Activated CD4-positive, alpha-beta T cell treated with anti-CD3 and anti-CD28 coated beads for 36 hours (primary cell): ENCODE measurements at regions of chr11 and their contacts with region 1.

Region 1: DNA sequence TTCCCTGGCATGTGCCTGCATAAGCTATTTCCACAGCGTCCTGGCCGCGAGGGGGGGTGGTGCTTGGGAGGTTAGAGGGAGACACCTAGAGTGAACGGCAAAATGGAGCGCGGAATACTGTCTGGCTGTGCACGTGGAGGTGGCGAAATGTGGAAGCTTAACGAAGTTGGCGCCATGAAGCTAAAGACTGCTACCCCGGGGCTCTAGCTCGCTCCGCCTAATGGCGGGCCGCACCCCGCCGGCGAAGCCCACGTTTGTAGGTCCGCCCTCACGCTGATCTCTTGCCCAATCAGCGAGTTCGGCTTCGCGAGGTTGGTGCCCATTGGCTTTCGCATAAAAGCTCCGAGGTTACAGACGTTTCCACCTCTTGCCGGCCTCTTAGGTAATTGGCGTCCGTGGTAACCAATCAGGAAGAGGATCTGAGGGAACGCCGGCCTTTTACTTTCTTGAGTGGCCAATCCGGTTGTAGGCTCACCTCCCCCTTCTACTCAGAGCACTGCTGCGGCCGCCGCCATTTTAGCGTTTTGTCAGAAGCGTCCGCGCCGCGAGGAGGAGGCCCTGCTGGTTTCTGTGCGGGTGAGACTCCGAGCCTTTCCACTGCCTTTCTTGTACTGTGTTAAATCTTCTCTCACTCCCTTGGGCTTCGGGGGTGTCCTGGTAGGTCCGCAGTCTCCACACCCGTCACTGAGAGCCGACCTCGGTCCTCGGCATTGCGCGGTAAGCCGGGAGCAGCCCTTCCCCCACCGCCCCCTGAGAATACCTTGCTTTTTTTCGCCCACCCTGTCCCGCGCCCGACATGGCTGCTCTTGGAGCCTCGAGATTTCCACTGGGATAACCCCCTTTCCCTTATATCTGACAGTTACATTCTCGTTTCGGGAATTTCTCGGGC is at the start of gene RBM4:
- DNase-seq: peak; percentile 97
- ATAC-seq: peak; percentile 95
- H3K4me3 Mint-ChIP-seq: peak within 1 kb of the TSS; percentile 89
- H3K27ac Mint-ChIP-seq: peak within 1 kb of the TSS; percentile 97
- H3K4me1 Mint-ChIP-seq: peaks cover 65% of the 10 kb centered on the region
- H3K27me3 Mint-ChIP-seq: no peaks in the 10 kb centered on the region
- total RNA-seq, gene RBM4: 104 to 122 TPM

Region 2: GRCh38 chr11:66510271-66510989 is 128.0 kb before region 1 on chr11 and contains the start of gene BBS1:
- CTCF ChIA-PET with region 1: interaction called, 3 read pairs
- POLR2A ChIA-PET with region 1: no interaction called
- intact Hi-C with region 1: loop called in 1 of 2 experiments (anchors 1 kb)
- DNase-seq: peak; percentile 88
- ATAC-seq: peak; percentile 98
- H3K4me3 Mint-ChIP-seq: peak within 1 kb of the TSS; percentile 86
- H3K27ac Mint-ChIP-seq: peak within 1 kb of the TSS; percentile 48
- H3K4me1 Mint-ChIP-seq: peaks cover 10% of the 10 kb centered on the region
- H3K27me3 Mint-ChIP-seq: no peaks in the 10 kb centered on the region
- total RNA-seq, gene BBS1: 9.4 to 10.7 TPM

Region 3: GRCh38 chr11:66545701-66546367 is 92.6 kb before region 1 on chr11 and contains the start of gene ZDHHC24:
- CTCF ChIA-PET with region 1: interaction called, 4 read pairs
- POLR2A ChIA-PET with region 1: interaction called, 4 read pairs
- intact Hi-C with region 1: loop called in 1 of 2 experiments (anchors 1 kb)
- DNase-seq: peak; percentile 95
- ATAC-seq: peak; percentile 94
- H3K4me3 Mint-ChIP-seq: peak within 1 kb of the TSS; percentile 76
- H3K27ac Mint-ChIP-seq: peak within 1 kb of the TSS; percentile 67
- H3K4me1 Mint-ChIP-seq: peaks cover 20% of the 10 kb centered on the region
- H3K27me3 Mint-ChIP-seq: peaks cover 5% of the 10 kb centered on the region
- total RNA-seq, gene ZDHHC24: 9.7 to 11.3 TPM

Region 4: GRCh38 chr11:66592457-66593302 is 45.7 kb before region 1 on chr11 and contains the starts of genes CCDC87 and CCS:
- CTCF ChIA-PET with region 1: no interaction called
- POLR2A ChIA-PET with region 1: interaction called, 20 read pairs
- intact Hi-C with region 1: loop called (anchors 1 to 2 kb)
- DNase-seq: peak; percentile 99
- ATAC-seq: peak; percentile 100
- H3K4me3 Mint-ChIP-seq: peak within 1 kb of the TSS; percentile 93
- H3K27ac Mint-ChIP-seq: peak within 1 kb of the TSS; percentile 98
- H3K4me1 Mint-ChIP-seq: peaks cover 19% of the 10 kb centered on the region
- H3K27me3 Mint-ChIP-seq: no peaks in the 10 kb centered on the region
- total RNA-seq, gene CCDC87: 0.09 to 0.14 TPM
- total RNA-seq, gene CCS: 16.3 to 24.0 TPM

Region 5: DNA sequence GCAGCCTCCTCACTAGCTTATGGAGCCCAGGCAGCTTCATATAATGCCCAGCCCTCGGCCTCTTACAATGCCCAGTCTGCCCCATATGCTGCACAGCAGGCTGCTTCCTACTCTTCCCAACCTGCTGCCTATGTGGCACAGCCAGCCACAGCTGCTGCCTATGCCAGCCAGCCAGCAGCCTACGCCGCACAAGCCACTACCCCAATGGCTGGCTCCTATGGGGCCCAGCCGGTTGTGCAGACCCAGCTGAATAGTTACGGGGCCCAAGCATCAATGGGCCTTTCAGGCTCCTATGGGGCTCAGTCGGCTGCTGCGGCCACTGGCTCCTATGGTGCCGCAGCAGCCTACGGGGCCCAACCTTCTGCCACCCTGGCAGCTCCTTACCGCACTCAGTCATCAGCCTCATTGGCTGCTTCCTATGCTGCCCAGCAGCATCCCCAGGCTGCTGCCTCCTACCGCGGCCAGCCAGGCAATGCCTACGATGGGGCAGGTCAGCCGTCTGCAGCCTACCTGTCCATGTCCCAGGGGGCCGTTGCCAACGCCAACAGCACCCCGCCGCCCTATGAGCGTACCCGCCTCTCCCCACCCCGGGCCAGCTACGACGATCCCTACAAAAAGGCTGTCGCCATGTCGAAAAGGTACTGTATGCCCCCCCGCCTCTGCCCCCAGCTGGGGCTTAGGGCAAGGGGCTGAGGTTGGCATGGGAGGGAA is 13.2 kb before region 1 on chr11:
- CTCF ChIA-PET with region 1: interaction called, 32 read pairs
- POLR2A ChIA-PET with region 1: interaction called, 98 read pairs
- intact Hi-C with region 1: no loop called
- DNase-seq: no peak
- ATAC-seq: no peak
- H3K4me3 Mint-ChIP-seq: no peak overlapping the region
- H3K27ac Mint-ChIP-seq: no peak overlapping the region
- H3K4me1 Mint-ChIP-seq: peaks cover 62% of the 10 kb centered on the region
- H3K27me3 Mint-ChIP-seq: no peaks in the 10 kb centered on the region

Region 6: GRCh38 chr11:66855574-66856495 is 217.4 kb after region 1 on chr11:
- CTCF ChIA-PET with region 1: no interaction called
- POLR2A ChIA-PET with region 1: interaction called, 4 read pairs
- intact Hi-C with region 1: loop called in 1 of 2 experiments (anchors 1 kb)
- DNase-seq: peak; percentile 94
- ATAC-seq: peak; percentile 83
- H3K4me3 Mint-ChIP-seq: peak overlapping the region; percentile 82
- H3K27ac Mint-ChIP-seq: peak overlapping the region; percentile 73
- H3K4me1 Mint-ChIP-seq: peaks cover 11% of the 10 kb centered on the region
- H3K27me3 Mint-ChIP-seq: no peaks in the 10 kb centered on the region

Region 7: GRCh38 chr11:67482825-67483798 is 844.7 kb after region 1 on chr11 and contains the start of gene AIP:
- CTCF ChIA-PET with region 1: no interaction called
- POLR2A ChIA-PET with region 1: no interaction called
- intact Hi-C with region 1: loop called in 1 of 2 experiments (anchors 10 kb)
- DNase-seq: peak; percentile 99
- ATAC-seq: peak; percentile 72
- H3K4me3 Mint-ChIP-seq: peak within 1 kb of the TSS; percentile 86
- H3K27ac Mint-ChIP-seq: peak within 1 kb of the TSS; percentile 99
- H3K4me1 Mint-ChIP-seq: peaks cover 50% of the 10 kb centered on the region
- H3K27me3 Mint-ChIP-seq: no peaks in the 10 kb centered on the region
- total RNA-seq, gene AIP: 142 to 144 TPM